Dendritic cell treated with granulocyte-macrophage colony-stimulating factor and Interleukin-4, amounts not matched to agents 40 ng/mL and 50 ng/mL, for 4 days (primary cell): ENCODE measurements at regions of chr5 and their contacts with region 1.

Region 1: DNA sequence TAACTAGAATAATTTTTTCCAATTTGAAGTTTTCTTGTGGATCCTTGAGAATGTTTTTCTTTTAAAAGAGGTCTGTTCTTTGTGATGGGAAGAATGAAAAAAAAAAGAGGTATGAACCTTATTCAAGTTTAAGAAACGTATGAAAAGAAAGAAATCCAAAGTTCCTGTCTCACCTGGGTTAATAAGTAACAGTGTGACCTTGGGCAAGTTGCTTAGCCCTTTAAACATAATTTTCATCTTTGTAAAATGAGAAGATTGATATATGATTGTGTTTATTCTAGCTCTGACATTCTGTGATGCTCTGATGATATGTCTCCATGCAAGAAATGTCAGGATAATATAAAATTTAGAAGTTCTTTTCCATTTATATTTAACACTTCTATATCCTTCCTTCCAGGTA is 19.3 kb downstream of the SLC26A2 start:
- H3K4me3 Mint-ChIP-seq: no peak overlapping the region
- H3K27ac Mint-ChIP-seq: no peak overlapping the region
- H3K4me1 Mint-ChIP-seq: no peaks in the 10 kb centered on the region
- H3K27me3 Mint-ChIP-seq: no peaks in the 10 kb centered on the region

Region 2: GRCh38 chr5:149749481-149750365 is 230.2 kb before region 1 on chr5:
- intact Hi-C with region 1: loop called (anchors 10 kb)
- H3K4me3 Mint-ChIP-seq: no peak overlapping the region
- H3K27ac Mint-ChIP-seq: peak overlapping the region; percentile 3
- H3K4me1 Mint-ChIP-seq: peaks cover 67% of the 10 kb centered on the region
- H3K27me3 Mint-ChIP-seq: no peaks in the 10 kb centered on the region

Region 3: DNA sequence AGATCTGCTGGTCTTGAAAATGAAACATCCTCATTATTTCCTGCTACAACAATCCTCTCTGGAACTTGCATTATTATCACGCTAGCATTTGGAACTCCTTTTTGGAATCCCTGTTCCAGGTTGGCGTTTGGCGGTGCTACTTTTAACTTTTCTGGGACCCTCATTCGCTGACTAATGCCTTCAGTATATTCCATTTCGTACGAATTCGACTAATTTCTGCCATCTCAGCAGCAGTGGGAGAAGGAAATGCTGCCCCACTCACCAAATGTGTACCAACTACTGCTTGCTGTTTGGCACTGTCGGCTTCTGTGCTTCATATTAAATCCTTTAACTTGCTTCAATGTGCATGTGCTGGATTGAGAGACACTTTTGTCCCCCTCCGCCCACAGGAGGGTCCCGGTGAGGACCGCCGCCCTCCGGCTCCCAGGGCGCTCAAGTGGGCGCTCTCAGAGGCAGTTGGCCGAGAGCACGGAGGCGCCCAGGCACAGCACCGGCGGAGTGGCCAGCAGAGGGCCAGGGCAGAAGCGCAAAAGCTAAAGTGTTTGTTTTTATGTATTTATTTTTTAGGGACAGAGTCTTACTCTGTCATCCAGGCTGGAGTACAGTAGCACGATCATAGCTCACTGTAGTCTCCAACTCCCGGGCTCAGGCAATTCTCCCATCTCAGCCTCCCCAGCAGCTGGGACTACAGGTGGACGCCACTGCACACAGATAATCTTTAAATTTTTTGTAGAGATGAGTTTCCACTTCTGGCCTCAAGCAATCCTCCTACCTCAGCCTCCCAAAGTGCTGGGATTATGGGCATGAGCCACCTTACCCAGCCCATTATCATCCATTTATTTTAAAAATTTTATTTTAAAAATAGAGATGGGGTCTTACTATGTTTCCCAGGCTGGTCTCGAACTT is 47.2 kb before region 1 on chr5:
- intact Hi-C with region 1: no loop called
- H3K4me3 Mint-ChIP-seq: peak overlapping the region; percentile 54
- H3K27ac Mint-ChIP-seq: no peak overlapping the region
- H3K4me1 Mint-ChIP-seq: peaks cover 22% of the 10 kb centered on the region
- H3K27me3 Mint-ChIP-seq: peaks cover 6% of the 10 kb centered on the region

Region 4: GRCh38 chr5:150022163-150022540 is 42.3 kb after region 1 on chr5:
- intact Hi-C with region 1: no loop called
- H3K4me3 Mint-ChIP-seq: no peak overlapping the region
- H3K27ac Mint-ChIP-seq: no peak overlapping the region
- H3K4me1 Mint-ChIP-seq: peaks cover 5% of the 10 kb centered on the region
- H3K27me3 Mint-ChIP-seq: no peaks in the 10 kb centered on the region